ENCODE measurements at regions of chr3 and their contacts with region 1.

Region 1: DNA sequence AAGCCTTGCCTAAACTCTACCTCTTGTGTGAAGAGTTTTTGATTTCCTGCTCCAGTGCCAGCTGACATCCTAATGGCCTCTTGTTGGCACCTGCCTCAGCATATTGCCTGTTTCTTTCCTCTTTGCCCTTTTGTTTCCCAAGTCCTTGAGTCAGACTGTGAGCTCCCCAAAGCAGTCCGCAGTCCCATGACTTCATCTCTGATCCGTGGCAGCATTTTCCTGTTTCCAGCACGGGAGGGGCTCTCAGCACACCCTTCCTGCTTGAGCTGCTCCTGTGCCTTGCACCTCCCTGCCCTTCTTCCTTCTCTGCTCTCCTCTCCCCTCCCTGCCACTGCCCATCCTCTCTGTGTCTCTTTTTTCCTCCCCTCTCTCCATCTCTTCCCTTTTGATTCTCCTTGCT is 179.6 kb downstream of the EPHB1 start:
- DNase-seq: no peak
- H3K4me3 ChIP-seq: no peak overlapping the region
- H3K27ac ChIP-seq: no peak overlapping the region
- H3K4me1 ChIP-seq: no peaks in the 10 kb centered on the region
- H3K27me3 ChIP-seq: no peaks in the 10 kb centered on the region
- CTCF ChIP-seq: no peak
- POLR2A ChIP-seq: no peak

Region 2: GRCh38 chr3:135224815-135225362 is 250.3 kb after region 1 on chr3:
- intact Hi-C with region 1: loop called (anchors 5 kb)
- DNase-seq: no peak
- H3K4me3 ChIP-seq: no peak overlapping the region
- H3K27ac ChIP-seq: no peak overlapping the region
- H3K4me1 ChIP-seq: no peaks in the 10 kb centered on the region
- H3K27me3 ChIP-seq: no peaks in the 10 kb centered on the region
- CTCF ChIP-seq: no peak
- POLR2A ChIP-seq: no peak

Measured in uterus (tissue), 4 donors.